Heart right ventricle (tissue), 16 donors: ENCODE measurements at regions of chr1 and their contacts with region 1.

Region 1: DNA sequence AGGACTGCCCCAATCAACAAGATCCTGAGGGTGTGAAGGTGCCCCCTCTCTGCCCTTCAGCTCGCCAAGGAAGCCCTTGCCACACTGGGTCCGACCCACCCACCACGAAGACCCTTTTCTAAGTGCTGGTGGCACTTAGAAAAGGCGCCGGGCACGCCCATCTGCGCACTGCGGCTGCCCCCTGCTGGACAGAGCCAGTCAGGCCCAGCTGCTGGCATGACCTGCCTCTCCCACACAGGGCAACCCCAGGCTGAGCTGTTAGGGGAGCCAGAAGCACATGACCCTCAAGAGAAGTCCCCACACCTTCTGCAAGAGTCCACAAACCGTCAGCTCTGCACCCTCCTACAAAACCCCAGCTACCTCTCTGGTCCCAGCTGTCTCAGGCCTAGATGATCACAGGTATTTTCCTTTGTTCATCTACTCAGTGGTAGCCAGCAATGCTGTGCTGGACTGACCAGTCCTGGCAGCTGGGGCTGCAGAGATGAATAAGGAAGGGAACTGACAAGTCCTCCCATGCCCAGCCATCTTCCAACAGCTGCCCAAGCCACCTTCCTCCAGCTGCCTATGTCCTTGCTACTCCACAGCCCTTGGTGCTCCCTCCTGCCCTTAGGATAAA is 40.0 kb upstream of the ZC3H12A start:
- DNase-seq: peak; percentile 51 to 72
- ATAC-seq: peak; percentile 52 to 81 (median 71)
- H3K4me3 ChIP-seq: no peak overlapping the region
- H3K27ac ChIP-seq: no peak overlapping the region
- H3K4me1 ChIP-seq: no peaks in the 10 kb centered on the region
- H3K27me3 ChIP-seq: peaks cover 5 to 86% (median 42%) of the 10 kb centered on the region in 7 donors
- CTCF ChIP-seq: peak; percentile 68 to 95 (median 90)

Region 2: GRCh38 chr1:36553591-36554322 is 880.6 kb before region 1 on chr1:
- intact Hi-C with region 1: loop called in 2 of 10 experiments (anchors 2 to 10 kb)
- DNase-seq: peak; percentile 43 to 52
- ATAC-seq: peak in 6 of 8 donors; percentile 42 to 78 (median 70)
- H3K4me3 ChIP-seq: no peak overlapping the region
- H3K27ac ChIP-seq: no peak overlapping the region
- H3K4me1 ChIP-seq: no peaks in the 10 kb centered on the region
- H3K27me3 ChIP-seq: peaks cover 4 to 77% (median 54%) of the 10 kb centered on the region in 7 donors
- CTCF ChIP-seq: peak; percentile 24 to 69 (median 60)

Region 3: GRCh38 chr1:36576118-36576517 is 858.3 kb before region 1 on chr1:
- intact Hi-C with region 1: loop called in 8 of 10 experiments (anchors 2 to 10 kb)
- DNase-seq: peak; percentile 42 to 45
- ATAC-seq: peak; percentile 46 to 77 (median 70)
- H3K4me3 ChIP-seq: no peak overlapping the region
- H3K27ac ChIP-seq: no peak overlapping the region
- H3K4me1 ChIP-seq: no peaks in the 10 kb centered on the region
- H3K27me3 ChIP-seq: peaks cover 0 to 70% (median 59%) of the 10 kb centered on the region in 7 donors
- CTCF ChIP-seq: peak; percentile 45 to 86 (median 74)

Region 4: DNA sequence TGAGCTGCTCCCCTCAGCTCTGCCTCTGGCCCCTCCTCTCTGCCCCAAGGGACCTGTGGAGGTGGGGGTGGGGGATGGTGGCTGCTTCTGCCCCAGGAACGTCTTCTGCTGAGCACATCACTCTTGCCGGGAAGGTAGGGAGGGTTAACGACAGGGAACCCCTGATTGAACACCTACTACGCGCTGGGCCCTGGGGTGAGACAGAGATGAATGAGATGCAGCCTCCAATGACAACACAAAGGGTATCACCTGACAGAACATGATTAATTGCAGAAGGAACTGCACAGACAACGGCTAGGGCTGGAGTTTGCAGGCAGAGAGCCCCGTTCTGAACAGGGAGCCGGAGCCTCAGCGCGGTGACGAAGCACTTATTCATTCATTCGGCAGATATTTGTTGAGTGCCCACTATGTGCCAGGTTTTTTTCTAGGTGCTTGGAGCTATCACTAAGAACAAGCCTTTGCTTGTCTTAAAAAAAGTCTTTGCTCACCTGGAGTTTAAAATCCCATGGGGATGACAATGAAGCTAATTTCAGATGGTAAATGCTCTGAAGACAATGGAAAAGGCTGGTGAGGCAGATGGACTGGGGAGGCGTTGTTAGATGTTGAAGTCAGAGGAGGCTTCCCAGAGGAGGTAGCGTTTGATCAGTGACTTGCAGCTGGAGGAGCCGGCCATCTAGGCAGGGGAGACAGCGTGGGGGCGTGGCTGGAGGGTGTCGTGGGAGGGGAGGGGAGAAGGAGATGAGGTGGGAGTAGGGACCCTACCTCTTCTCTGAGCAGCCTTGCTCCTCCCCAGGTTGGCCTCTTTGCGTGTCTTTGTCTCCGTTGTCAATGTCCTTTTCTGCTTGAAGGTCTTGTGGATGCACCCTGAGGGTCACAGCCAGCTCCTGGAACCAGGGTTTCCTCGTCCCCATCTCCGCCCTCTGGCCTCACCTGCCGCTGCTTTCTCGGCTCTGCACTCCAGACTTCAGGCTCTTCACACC is 848.5 kb before region 1 on chr1:
- intact Hi-C with region 1: loop called in 1 of 10 experiments (anchors 10 kb)
- DNase-seq: no peak
- ATAC-seq: no peak
- H3K4me3 ChIP-seq: no peak overlapping the region
- H3K27ac ChIP-seq: no peak overlapping the region
- H3K4me1 ChIP-seq: no peaks in the 10 kb centered on the region
- H3K27me3 ChIP-seq: peaks cover 0 to 94% (median 83%) of the 10 kb centered on the region in 7 donors
- CTCF ChIP-seq: no peak

Region 5: GRCh38 chr1:36703526-36704208 is 730.7 kb before region 1 on chr1:
- intact Hi-C with region 1: loop called in 9 of 10 experiments (anchors 2 to 10 kb)
- DNase-seq: peak; percentile 66 to 69
- ATAC-seq: peak; percentile 58 to 91 (median 84)
- H3K4me3 ChIP-seq: no peak overlapping the region
- H3K27ac ChIP-seq: no peak overlapping the region
- H3K4me1 ChIP-seq: peaks cover 0 to 7% (median 0%) of the 10 kb centered on the region in 9 donors
- H3K27me3 ChIP-seq: peaks cover 8 to 67% (median 47%) of the 10 kb centered on the region in 7 donors
- CTCF ChIP-seq: peak; percentile 54 to 86 (median 82)

Region 6: GRCh38 chr1:37197411-37197810 is 237.0 kb before region 1 on chr1:
- intact Hi-C with region 1: no loop called
- DNase-seq: no peak
- ATAC-seq: no peak
- H3K4me3 ChIP-seq: no peak overlapping the region
- H3K27ac ChIP-seq: no peak overlapping the region
- H3K4me1 ChIP-seq: no peaks in the 10 kb centered on the region
- H3K27me3 ChIP-seq: peaks cover 0 to 33% (median 3%) of the 10 kb centered on the region in 7 donors
- CTCF ChIP-seq: no peak

Region 7: DNA sequence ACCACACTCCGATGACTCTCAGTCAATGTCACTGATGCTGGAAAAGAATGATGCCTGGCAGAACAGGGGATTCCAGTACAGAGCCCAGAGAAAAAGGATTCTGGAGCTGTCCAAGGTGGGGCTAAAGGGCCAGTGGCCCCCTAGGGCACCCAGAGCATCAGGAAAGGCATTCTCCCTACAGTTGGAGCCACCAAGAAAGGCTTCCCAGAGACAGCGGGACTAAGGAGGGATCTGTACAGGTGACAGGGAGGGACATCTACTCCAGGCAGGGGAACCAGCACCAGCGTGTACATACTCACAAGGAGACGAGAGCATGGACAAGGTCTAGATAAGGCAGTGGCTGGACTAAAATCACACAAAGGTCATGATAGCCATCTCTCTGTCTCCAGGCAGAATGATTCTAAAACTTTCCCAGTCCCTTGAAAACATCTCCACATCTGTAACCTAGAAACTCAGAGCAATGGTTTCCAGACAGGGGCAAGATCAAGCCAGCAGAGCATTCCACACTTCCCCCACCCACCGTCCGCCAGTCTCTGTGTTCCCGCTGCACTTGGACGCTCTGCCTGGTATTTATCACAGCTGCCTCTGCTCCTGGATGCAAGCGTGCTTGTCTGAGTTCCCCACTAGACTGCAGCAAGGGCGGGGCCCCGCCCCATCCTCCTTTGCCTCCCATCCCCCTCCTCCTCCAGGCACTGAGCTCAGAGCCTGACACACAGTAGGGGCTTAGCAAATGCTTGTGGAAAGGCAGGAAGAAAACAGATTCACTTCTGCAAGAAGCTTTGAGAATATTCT is 71.6 kb before region 1 on chr1:
- intact Hi-C with region 1: no loop called
- DNase-seq: peak in 1 of 2 donors; percentile 16
- ATAC-seq: peak in 5 of 8 donors; percentile 11 to 78 (median 58)
- H3K4me3 ChIP-seq: no peak overlapping the region
- H3K27ac ChIP-seq: peak overlapping the region in 1 of 10 donors; percentile 15
- H3K4me1 ChIP-seq: peaks cover 0 to 12% (median 0%) of the 10 kb centered on the region in 9 donors
- H3K27me3 ChIP-seq: peaks cover 0 to 77% (median 14%) of the 10 kb centered on the region in 7 donors
- CTCF ChIP-seq: no peak